Activated T-helper 2 cell treated with anti-CD3 and anti-CD28 coated beads, Interferon-gamma antibody, Interleukin-2, Interleukin-4, amounts not matched to agents 10 μg/mL and 5 μg/mL and 100 μg/mL, durations not matched to agents 14 hours and 24 hours and 36 hours (primary cell): ENCODE measurements at regions of chr2 and their contacts with region 1.

Region 1: DNA sequence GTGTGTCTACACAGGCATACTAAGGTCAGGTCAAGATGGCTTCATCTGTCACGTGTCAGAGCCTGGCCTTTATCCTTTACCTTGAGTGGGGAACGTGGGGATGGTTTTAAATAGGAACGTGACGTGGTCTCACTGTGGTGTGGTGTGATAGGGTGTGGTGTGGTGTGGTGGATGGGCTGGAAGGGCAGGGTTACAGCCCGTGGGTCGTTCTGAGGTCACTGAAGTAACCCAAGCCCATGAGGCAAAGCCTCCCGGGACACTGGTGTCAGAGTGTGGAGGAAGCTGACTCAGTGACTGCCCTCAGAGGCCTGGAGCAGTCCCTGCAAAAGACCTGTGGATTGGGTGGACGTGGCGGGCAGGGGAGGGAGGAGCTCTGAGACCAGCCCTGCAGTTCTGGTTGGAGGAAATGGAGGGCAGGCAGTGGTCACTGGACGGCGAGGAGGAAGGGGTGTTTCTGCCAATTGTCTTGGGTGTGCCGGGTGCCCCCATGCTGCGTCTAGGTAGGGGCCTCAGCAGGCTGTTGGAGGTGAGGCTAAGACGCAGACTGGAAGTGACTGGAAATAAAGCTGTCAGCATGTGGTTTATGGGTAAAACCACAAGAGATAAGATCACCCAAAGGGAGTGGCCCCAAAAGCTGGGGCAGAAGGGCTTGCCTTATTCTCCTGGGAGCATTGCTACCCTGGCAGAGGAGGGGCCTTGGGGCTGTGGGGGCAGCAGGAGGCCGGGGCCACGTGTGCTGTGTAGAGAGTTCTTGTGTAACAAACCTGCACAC is 84.8 kb downstream of the SH3RF3 start:
- DNase-seq: peak; percentile 75
- H3K4me3 Mint-ChIP-seq: peak overlapping the region; percentile 51
- H3K27ac Mint-ChIP-seq: peak overlapping the region; percentile 93
- H3K4me1 Mint-ChIP-seq: peaks cover 68% of the 10 kb centered on the region
- H3K27me3 Mint-ChIP-seq: peaks cover 52% of the 10 kb centered on the region

Region 2: GRCh38 chr2:109031476-109032228 is 182.2 kb before region 1 on chr2:
- intact Hi-C with region 1: loop called (anchors 2 kb)
- DNase-seq: peak; percentile 56
- H3K4me3 Mint-ChIP-seq: peak overlapping the region; percentile 70
- H3K27ac Mint-ChIP-seq: peak overlapping the region; percentile 45
- H3K4me1 Mint-ChIP-seq: peaks cover 15% of the 10 kb centered on the region
- H3K27me3 Mint-ChIP-seq: peaks cover 1% of the 10 kb centered on the region

Region 3: GRCh38 chr2:109046925-109047508 is 166.8 kb before region 1 on chr2:
- intact Hi-C with region 1: no loop called
- DNase-seq: no peak
- H3K4me3 Mint-ChIP-seq: no peak overlapping the region
- H3K27ac Mint-ChIP-seq: no peak overlapping the region
- H3K4me1 Mint-ChIP-seq: peaks cover 4% of the 10 kb centered on the region
- H3K27me3 Mint-ChIP-seq: peaks cover 4% of the 10 kb centered on the region

Region 4: DNA sequence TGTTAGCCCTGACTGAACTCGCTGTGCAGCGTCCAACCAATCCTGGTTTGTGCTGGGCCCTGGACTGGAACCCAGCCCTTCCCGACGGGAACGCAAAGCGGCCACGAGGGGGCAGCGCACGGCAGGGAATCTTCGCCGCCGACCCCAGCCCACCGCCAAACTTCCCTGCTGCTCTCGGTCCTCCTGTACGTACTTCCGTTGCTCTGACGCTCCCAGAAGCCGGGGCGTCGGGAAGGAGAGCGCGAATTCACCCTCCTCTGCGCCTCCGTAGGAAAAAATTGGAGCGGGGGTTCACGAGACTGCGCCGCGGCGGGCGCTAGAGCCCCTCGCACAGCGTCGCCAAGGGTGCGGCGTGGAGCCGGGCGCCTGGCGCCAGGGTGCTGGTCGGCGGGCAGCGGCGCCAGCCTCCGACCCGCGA is 85.8 kb before region 1 on chr2:
- intact Hi-C with region 1: loop called (anchors 2 kb)
- DNase-seq: peak; percentile 40
- H3K4me3 Mint-ChIP-seq: peak overlapping the region; percentile 68
- H3K27ac Mint-ChIP-seq: no peak overlapping the region
- H3K4me1 Mint-ChIP-seq: peaks cover 19% of the 10 kb centered on the region
- H3K27me3 Mint-ChIP-seq: peaks cover 62% of the 10 kb centered on the region

Region 5: GRCh38 chr2:109143214-109144187 is 70.3 kb before region 1 on chr2:
- intact Hi-C with region 1: loop called (anchors 1 kb)
- DNase-seq: peak; percentile 64
- H3K4me3 Mint-ChIP-seq: no peak overlapping the region
- H3K27ac Mint-ChIP-seq: no peak overlapping the region
- H3K4me1 Mint-ChIP-seq: peaks cover 46% of the 10 kb centered on the region
- H3K27me3 Mint-ChIP-seq: peaks cover 54% of the 10 kb centered on the region

Region 6: GRCh38 chr2:109173311-109174171 is 40.3 kb before region 1 on chr2:
- intact Hi-C with region 1: no loop called
- DNase-seq: no peak
- H3K4me3 Mint-ChIP-seq: no peak overlapping the region
- H3K27ac Mint-ChIP-seq: no peak overlapping the region
- H3K4me1 Mint-ChIP-seq: no peaks in the 10 kb centered on the region
- H3K27me3 Mint-ChIP-seq: peaks cover 28% of the 10 kb centered on the region

Region 7: GRCh38 chr2:109333414-109334210 is 119.8 kb after region 1 on chr2:
- intact Hi-C with region 1: loop called (anchors 2 kb)
- DNase-seq: no peak
- H3K4me3 Mint-ChIP-seq: no peak overlapping the region
- H3K27ac Mint-ChIP-seq: no peak overlapping the region
- H3K4me1 Mint-ChIP-seq: peaks cover 29% of the 10 kb centered on the region
- H3K27me3 Mint-ChIP-seq: peaks cover 30% of the 10 kb centered on the region

Region 8: GRCh38 chr2:109429233-109430095 is 215.6 kb after region 1 on chr2:
- intact Hi-C with region 1: loop called (anchors 5 kb)
- DNase-seq: no peak
- H3K4me3 Mint-ChIP-seq: no peak overlapping the region
- H3K27ac Mint-ChIP-seq: no peak overlapping the region
- H3K4me1 Mint-ChIP-seq: no peaks in the 10 kb centered on the region
- H3K27me3 Mint-ChIP-seq: no peaks in the 10 kb centered on the region